ENCODE measurements at regions of chr17 and their contacts with region 1.

Region 1: DNA sequence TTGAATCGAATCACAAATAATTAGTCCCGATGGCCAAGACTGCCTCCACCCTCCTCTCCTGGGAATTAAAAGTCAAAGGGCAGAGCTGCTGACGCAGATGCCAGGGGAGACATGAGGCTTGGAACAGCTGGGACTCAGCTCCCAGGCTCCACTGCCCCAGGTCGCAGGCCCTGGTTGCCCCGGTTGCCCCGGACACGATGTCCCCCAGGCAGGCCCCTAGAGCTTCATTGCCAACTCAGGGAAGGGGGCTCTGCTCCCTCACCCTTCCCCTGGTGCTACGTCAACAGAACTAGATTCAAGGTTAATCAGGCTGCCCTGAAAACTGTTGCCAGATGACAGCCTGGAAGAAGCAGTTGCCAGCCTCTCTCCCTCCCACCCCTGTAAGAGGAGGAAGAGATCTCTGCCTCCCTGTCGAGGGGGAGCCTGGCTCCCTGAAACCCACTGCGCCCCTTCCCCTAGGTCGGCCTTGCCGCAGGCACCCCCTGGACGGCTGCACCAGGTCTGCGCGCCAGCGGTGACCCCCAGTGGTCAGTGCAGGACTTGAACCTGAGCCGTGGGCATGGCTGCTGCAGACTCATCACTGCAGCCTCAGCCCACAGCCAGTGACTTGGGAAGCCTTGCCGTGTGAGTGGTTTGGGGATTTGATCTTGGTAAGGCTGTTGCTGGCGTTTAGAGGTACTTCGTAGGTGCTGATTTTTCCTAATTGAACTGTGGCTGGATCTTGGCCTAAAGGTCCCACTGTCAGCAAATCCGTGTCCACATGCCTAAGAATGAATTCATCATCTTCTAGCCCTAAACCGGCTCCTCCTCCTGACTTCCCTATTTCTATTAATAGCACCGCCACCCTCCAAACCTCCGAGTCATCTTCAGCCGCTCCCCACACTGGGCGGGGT is 84.1 kb upstream of the TOB1 start:
- DNase-seq: peak; percentile 60 to 91 (median 70)
- H3K4me3 ChIP-seq: peak overlapping the region in 1 of 3 donors; percentile 7
- H3K27ac ChIP-seq: peak overlapping the region; percentile 91 to 95
- H3K4me1 ChIP-seq: peaks cover 2 to 46% (median 42%) of the 10 kb centered on the region in 3 donors
- H3K27me3 ChIP-seq: no peaks in the 10 kb centered on the region
- CTCF ChIP-seq: peak; percentile 84

Region 2: DNA sequence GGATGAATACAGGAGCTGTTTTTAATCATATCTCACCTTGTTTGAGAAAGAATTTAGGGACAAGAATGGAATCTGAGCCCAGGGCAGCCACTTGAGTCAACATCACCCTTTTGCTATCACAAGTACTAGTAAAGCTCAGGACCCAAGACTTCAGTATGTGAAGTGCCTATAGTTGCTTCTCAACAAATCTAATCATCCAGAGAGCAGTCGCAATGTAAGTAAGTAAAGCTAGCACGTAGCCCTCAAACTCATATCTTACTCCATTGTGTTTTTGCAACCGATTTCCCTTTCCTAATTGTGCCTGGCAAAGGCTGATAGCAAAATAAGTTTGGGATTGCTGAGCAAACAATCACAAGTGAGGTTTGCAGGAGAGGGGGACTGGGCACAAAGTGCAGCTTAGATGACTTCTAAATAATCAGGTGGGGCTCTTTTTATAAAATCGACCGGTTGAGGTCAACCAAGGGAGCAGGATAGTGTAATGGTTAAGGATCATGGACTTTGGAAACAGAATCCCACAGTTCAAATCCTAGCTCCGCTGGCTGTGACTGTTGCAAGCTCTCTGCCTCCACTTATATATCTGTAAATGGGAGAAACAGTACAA is 97.1 kb before region 1 on chr17:
- intact Hi-C with region 1: loop called (anchors 5 kb)
- DNase-seq: no peak
- H3K4me3 ChIP-seq: no peak overlapping the region
- H3K27ac ChIP-seq: no peak overlapping the region
- H3K4me1 ChIP-seq: peaks cover 0 to 3% (median 3%) of the 10 kb centered on the region in 3 donors
- H3K27me3 ChIP-seq: no peaks in the 10 kb centered on the region
- CTCF ChIP-seq: no peak